CD14-positive monocyte (primary cell): ENCODE measurements at regions of chr4 and their contacts with region 1.

Region 1: DNA sequence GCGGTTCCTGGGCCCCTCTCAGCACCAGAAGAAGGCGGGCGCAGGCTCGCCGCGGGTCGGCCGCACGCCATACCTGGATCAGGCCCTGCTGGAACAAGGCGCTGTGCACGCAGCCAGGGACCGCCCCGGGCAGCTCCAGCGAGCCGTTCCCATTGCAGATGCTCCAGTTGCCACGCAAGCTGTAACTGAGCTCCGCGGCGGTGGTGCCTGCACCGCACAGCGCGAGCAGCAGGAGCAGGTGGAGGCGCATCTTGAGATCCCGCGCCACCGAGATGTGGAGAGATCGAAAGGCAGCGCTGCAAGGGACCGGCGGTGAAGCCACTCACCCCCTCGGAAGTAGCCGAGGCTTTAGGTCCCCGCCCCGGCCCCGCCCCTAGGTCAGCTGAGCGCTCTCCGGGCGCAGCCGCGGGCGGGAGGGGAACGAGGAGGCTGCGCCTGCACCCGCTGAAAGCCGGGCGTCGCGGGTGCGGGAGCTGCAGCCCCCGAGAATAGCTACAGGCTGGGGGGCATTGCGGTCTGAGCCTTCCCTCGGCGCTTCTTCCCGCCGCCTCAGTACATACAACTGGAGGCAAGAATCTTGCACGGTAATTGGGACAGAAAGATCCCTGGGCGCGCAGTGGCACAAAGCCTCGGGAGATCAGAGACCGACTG is at the start of gene MANBA:
- DNase-seq: peak; percentile 88 to 90 (median 88)
- H3K4me3 ChIP-seq: peak within 1 kb of the TSS; percentile 79 to 99 (median 95)
- H3K4me3 Mint-ChIP-seq: peak within 1 kb of the TSS; percentile 88 to 92
- H3K27ac ChIP-seq: peak within 1 kb of the TSS; percentile 99 to 100
- H3K27ac Mint-ChIP-seq: peak within 1 kb of the TSS; percentile 97 to 99 (median 98)
- H3K4me1 ChIP-seq: peaks cover 39 to 43% of the 10 kb centered on the region in 2 donors
- H3K4me1 Mint-ChIP-seq: peaks cover 46% of the 10 kb centered on the region
- H3K27me3 ChIP-seq: no peaks in the 10 kb centered on the region
- H3K27me3 Mint-ChIP-seq: peaks cover 0 to 4% (median 3%) of the 10 kb centered on the region in 3 donors
- CTCF ChIP-seq: no peak
- polyA plus RNA-seq, gene MANBA: 80.8 to 94.4 (median 88.7) TPM

Region 2: DNA sequence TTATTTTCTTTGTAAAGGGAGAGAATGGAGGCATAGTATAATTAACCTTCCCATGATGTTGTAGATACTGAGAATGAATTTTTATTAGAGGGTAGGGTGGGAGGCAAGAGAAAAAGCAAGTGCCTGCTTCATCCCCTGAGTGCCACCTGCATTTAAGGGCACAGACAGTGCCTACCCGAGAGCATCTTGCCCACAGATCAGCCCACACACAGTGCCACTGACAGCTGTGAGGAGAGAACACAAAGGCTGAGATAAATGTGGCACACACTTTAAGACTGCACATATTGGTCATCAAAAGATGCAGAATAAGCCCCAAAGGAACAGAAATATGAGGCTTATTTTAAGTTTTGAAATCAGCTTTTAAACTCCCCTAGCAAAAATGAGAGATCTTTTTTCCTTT is 666.3 kb before region 1 on chr4:
- intact Hi-C with region 1: no loop called
- DNase-seq: no peak
- H3K4me3 ChIP-seq: no peak overlapping the region
- H3K4me3 Mint-ChIP-seq: no peak overlapping the region
- H3K27ac ChIP-seq: no peak overlapping the region
- H3K27ac Mint-ChIP-seq: no peak overlapping the region
- H3K4me1 ChIP-seq: no peaks in the 10 kb centered on the region
- H3K4me1 Mint-ChIP-seq: no peaks in the 10 kb centered on the region
- H3K27me3 ChIP-seq: no peaks in the 10 kb centered on the region
- H3K27me3 Mint-ChIP-seq: peaks cover 0 to 1% (median 0%) of the 10 kb centered on the region in 3 donors
- CTCF ChIP-seq: no peak

Region 3: DNA sequence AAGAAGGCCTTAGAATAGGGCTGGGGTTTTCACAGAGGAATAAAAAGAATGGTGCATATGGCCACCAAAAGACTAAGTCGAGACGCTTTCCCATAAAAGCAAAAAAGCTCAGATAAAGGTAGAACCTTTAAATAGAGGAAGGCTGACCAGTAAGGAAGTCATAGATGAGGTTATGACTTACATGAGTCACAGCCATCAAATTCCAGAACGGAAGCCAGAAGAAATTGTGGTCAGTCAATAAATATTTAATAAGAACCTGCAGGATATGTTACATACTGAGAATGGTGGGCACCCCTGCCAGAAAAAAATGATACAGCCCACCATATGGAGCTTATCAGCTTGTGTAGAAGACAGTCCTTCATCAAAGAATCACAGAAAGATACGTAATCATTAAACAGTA is 120.1 kb before region 1 on chr4:
- intact Hi-C with region 1: no loop called
- DNase-seq: no peak
- H3K4me3 ChIP-seq: no peak overlapping the region
- H3K4me3 Mint-ChIP-seq: no peak overlapping the region
- H3K27ac ChIP-seq: peak overlapping the region in 1 of 2 donors; percentile 9
- H3K27ac Mint-ChIP-seq: peak overlapping the region in 1 of 7 donors; percentile 27
- H3K4me1 ChIP-seq: no peaks in the 10 kb centered on the region
- H3K4me1 Mint-ChIP-seq: no peaks in the 10 kb centered on the region
- H3K27me3 ChIP-seq: no peaks in the 10 kb centered on the region
- H3K27me3 Mint-ChIP-seq: peaks cover 0 to 2% (median 0%) of the 10 kb centered on the region in 3 donors
- CTCF ChIP-seq: no peak

Region 4: GRCh38 chr4:102726068-102726467 is 34.7 kb before region 1 on chr4:
- intact Hi-C with region 1: loop called in 1 of 2 experiments (anchors 5 kb)
- DNase-seq: no peak
- H3K4me3 ChIP-seq: no peak overlapping the region
- H3K4me3 Mint-ChIP-seq: no peak overlapping the region
- H3K27ac ChIP-seq: peak overlapping the region in 1 of 2 donors; percentile 34
- H3K27ac Mint-ChIP-seq: peak overlapping the region in 1 of 7 donors; percentile 48
- H3K4me1 ChIP-seq: no peaks in the 10 kb centered on the region
- H3K4me1 Mint-ChIP-seq: no peaks in the 10 kb centered on the region
- H3K27me3 ChIP-seq: no peaks in the 10 kb centered on the region
- H3K27me3 Mint-ChIP-seq: no peaks in the 10 kb centered on the region
- CTCF ChIP-seq: no peak

Region 5: GRCh38 chr4:102789317-102789717 is 28.5 kb after region 1 on chr4:
- intact Hi-C with region 1: loop called in 1 of 2 experiments (anchors 2 kb)
- DNase-seq: peak in 2 of 3 donors; percentile 30 to 40
- H3K4me3 ChIP-seq: no peak overlapping the region
- H3K4me3 Mint-ChIP-seq: no peak overlapping the region
- H3K27ac ChIP-seq: no peak overlapping the region
- H3K27ac Mint-ChIP-seq: no peak overlapping the region
- H3K4me1 ChIP-seq: peaks cover 4 to 13% of the 10 kb centered on the region in 2 donors
- H3K4me1 Mint-ChIP-seq: peaks cover 19% of the 10 kb centered on the region
- H3K27me3 ChIP-seq: no peaks in the 10 kb centered on the region
- H3K27me3 Mint-ChIP-seq: no peaks in the 10 kb centered on the region
- CTCF ChIP-seq: no peak